ENCODE measurements at regions of chr1 and their contacts with region 1.

Region 1: DNA sequence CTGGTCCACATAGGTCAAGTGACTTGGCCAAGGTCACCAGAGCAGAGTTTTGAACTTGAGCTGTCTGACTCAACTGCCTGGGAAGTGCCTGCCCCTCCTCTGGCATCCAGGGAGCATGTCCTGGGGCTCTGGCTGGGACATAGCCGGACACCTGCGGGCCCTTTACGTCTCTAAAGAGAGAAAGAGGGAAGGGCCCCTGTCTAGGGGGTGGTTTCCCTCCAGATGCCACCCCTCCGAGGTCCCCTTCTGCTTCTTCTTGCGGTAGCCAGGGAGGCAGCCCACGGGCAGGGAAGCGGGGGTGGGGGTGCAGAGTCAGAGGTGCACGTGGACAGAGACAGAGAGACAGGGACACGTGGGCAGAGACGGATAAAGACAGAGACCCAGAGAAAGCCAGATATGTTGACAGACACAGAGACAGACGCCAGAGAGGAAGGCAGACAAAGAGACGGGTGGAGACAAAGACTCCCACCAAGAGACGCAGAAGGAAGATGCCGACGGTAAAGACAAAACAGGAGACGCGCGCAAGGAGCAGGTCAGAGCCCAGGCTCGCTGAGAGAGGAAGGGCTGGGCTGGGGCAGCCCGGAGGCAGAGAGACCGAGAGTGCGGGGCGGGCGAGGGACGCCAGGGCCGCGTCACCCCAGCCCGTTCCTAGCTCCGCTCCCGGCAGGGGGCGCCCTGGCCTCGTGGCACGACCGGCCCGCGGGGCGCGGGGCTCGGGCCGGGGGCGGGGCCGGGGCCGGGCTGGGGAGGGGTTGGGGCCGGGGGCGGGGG is 458 bp upstream of the ALPL start:
- DNase-seq: peak; percentile 70 to 73
- H3K4me3 ChIP-seq: no peak overlapping the region
- H3K27ac ChIP-seq: no peak overlapping the region
- H3K4me1 ChIP-seq: peaks cover 12 to 16% of the 10 kb centered on the region in 2 donors
- H3K27me3 ChIP-seq: no peaks in the 10 kb centered on the region
- CTCF ChIP-seq: peak in 5 of 6 experiments; percentile 24 to 83 (median 35)
- POLR2A ChIP-seq: no peak

Region 2: DNA sequence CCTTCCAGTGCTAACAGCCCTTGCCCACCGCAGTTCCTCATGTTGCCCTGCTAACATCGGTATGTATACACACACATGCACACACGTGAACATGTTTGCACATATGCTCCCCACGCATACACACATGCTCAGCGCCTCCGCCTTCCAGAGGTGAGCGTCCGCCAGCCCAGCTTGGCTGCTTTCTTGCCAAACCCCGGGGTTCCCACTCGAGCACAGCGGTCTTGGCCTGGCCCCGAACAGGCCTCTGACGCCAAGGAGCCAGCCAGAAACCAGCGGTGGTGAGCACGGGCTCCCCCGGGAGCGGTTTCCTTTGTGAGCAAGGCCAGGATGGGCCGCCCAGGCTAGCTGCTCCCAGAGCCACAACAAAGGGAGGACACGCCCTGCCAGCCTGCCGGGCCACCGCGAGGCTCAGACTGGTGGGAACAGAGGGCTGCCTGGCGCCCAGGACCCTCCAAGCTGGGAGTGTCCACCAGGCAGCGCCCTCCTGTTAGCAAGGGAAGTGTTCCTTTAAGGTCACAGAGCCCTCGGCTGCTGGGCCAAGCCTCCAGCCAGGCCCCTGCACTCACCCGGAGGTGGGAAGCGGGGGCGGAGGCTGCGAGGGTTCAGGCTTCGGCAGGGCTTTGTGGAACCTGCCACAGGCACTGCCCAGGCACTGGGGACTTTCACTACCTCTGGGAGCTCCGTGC is 65.8 kb after region 1 on chr1:
- intact Hi-C with region 1: loop called (anchors 5 kb)
- DNase-seq: peak; percentile 38 to 50
- H3K4me3 ChIP-seq: no peak overlapping the region
- H3K27ac ChIP-seq: peak overlapping the region; percentile 50 to 80 (median 78)
- H3K4me1 ChIP-seq: peaks cover 0 to 15% of the 10 kb centered on the region in 2 donors
- H3K27me3 ChIP-seq: no peaks in the 10 kb centered on the region
- CTCF ChIP-seq: no peak
- POLR2A ChIP-seq: peak in 1 of 2 donors; percentile 18

Region 3: GRCh38 chr1:21659099-21659923 is 150.5 kb after region 1 on chr1:
- intact Hi-C with region 1: loop called (anchors 2 kb)
- DNase-seq: peak; percentile 89 to 90
- H3K4me3 ChIP-seq: peak overlapping the region in 1 of 3 donors; percentile 3
- H3K27ac ChIP-seq: peak overlapping the region; percentile 51 to 74 (median 54)
- H3K4me1 ChIP-seq: peaks cover 30 to 33% of the 10 kb centered on the region in 2 donors
- H3K27me3 ChIP-seq: no peaks in the 10 kb centered on the region
- CTCF ChIP-seq: peak; percentile 88 to 99 (median 97)
- POLR2A ChIP-seq: peak in 1 of 2 donors; percentile 42